OCI-LY7 (cell line): ENCODE measurements at regions of chr2 and their contacts with region 1.

Region 1: DNA sequence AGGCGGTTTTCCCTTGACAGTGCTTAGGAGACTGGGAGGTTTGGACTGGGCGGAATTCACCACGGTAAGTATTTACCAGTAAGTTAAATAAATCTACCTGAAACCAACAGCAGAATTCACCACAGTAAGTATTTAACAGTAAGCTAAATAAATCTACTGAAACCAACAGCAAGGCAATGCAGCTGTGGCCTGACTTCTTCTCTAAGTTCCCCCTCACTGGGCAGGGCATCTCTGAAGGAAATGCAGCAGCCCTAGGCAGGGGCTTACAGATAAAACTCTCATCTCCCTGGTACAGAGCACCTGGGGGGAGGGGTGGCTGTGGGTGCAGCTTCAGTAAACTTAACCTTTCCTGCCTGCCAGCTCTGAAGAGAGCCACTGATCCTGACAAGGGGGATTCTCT is 432.5 kb upstream of the LRRTM1 start:
- DNase-seq: peak; percentile 90
- H3K4me3 ChIP-seq: no peak overlapping the region
- H3K27ac ChIP-seq: peak overlapping the region; percentile 96
- H3K4me1 ChIP-seq: peaks cover 34% of the 10 kb centered on the region
- CTCF ChIP-seq: no peak

Region 2: GRCh38 chr2:80326214-80326613 is 410.8 kb before region 1 on chr2:
- CTCF ChIA-PET with region 1: no interaction called
- POLR2A ChIA-PET with region 1: no interaction called
- intact Hi-C with region 1: loop called (anchors 10 kb)
- DNase-seq: peak; percentile 40
- H3K4me3 ChIP-seq: no peak overlapping the region
- H3K27ac ChIP-seq: no peak overlapping the region
- H3K4me1 ChIP-seq: no peaks in the 10 kb centered on the region
- CTCF ChIP-seq: peak; percentile 71

Region 3: DNA sequence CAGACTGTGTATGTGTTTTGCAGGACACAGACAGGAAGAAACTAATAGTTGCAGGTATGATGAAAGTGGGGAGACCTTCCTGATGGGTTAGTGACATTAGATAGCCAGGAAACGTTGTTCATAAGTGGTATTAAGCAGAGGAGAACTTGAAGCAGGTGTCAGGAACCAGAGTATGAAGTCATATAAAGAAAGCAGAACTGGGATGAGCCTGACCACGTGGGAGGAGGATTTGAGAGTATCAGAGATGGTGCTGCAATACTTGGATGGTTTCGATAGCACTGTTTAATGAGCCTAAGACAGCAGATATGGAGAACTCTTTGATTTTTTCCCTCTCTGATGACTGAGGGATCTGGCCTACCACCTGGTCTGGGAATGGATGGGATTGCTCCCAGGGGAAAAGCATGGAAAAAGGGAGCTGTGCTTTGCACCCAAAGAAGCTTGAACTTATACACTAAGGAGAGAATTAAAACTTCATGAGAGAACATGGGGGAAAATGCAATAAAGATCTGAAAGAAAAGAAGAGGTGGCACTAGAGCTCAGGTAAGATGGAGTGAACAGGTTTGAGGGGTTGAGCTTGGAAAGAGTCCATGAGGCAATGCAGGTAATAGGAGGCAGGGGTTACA is 206.5 kb before region 1 on chr2:
- CTCF ChIA-PET with region 1: no interaction called
- POLR2A ChIA-PET with region 1: interaction called, 4 read pairs
- intact Hi-C with region 1: loop called (anchors 2 kb)
- DNase-seq: peak; percentile 60
- H3K4me3 ChIP-seq: no peak overlapping the region
- H3K27ac ChIP-seq: peak overlapping the region; percentile 48
- H3K4me1 ChIP-seq: peaks cover 29% of the 10 kb centered on the region
- CTCF ChIP-seq: no peak

Region 4: DNA sequence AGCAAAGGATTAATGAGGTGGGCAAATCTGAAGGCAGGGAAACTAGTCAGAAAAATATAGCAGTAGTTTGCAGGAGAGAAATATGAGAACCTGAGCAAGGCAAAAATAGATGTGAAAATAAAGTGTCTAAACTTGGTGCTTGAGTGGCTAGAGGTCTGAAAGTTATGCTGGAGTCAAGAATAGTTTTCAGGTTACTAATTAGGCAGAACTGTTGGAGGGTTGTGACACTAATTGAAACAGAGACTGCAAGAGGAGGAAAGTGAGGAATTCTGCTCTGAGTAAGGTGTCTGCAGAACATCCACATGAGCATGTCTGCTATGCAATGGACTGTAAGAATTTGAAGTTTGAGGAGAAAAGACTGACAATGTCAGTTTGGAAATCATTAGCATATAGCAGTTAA is 11.5 kb after region 1 on chr2:
- CTCF ChIA-PET with region 1: interaction called, 4 read pairs
- POLR2A ChIA-PET with region 1: interaction called, 20 read pairs
- intact Hi-C with region 1: no loop called
- DNase-seq: peak; percentile 21
- H3K4me3 ChIP-seq: peak overlapping the region; percentile 18
- H3K27ac ChIP-seq: peak overlapping the region; percentile 58
- H3K4me1 ChIP-seq: peaks cover 37% of the 10 kb centered on the region
- CTCF ChIP-seq: no peak

Region 5: DNA sequence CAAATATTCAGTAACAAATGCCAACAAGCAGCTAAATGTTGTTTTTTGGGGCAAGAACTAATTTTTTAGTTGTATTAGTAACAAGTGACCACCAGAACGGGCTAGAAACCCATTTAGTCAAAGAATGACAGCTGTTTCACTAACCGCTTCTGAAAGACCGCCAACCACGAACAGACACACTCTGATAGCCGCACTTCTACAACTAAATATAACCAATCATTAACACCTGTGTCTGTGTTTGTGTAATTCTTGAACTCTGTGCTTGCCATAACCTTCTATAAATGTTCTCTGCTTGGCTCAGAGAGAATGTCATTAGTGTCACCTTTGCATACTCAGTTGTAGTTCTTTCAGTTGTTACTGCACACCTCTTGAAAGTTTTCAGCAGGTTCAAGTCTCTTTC is 93.8 kb after region 1 on chr2:
- CTCF ChIA-PET with region 1: no interaction called
- POLR2A ChIA-PET with region 1: interaction called, 5 read pairs
- intact Hi-C with region 1: loop called (anchors 1 kb)
- DNase-seq: peak; percentile 86
- H3K4me3 ChIP-seq: peak overlapping the region; percentile 50
- H3K27ac ChIP-seq: peak overlapping the region; percentile 96
- H3K4me1 ChIP-seq: peaks cover 53% of the 10 kb centered on the region
- CTCF ChIP-seq: no peak

Region 6: DNA sequence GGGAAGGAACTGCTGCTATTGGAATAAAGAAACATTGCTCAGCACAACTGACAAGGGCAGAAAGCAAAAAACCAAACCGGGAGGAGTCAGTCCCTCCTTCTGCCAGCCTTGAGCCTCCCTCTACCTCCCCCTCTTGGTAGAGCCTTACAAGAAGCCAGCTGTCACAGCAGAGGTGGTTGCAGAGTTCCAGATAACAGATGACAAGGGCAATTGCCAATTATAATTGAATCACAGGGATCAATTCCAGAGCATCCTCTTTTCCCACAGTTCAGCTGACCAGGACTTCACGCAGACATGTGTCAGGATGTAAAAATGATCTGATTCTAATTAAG is 115.7 kb after region 1 on chr2:
- CTCF ChIA-PET with region 1: no interaction called
- POLR2A ChIA-PET with region 1: interaction called, 4 read pairs
- intact Hi-C with region 1: loop called (anchors 5 kb)
- DNase-seq: peak; percentile 56
- H3K4me3 ChIP-seq: no peak overlapping the region
- H3K27ac ChIP-seq: peak overlapping the region; percentile 32
- H3K4me1 ChIP-seq: peaks cover 19% of the 10 kb centered on the region
- CTCF ChIP-seq: peak; percentile 58